Mammary epithelial cell (primary cell): ENCODE measurements at regions of chr1 and their contacts with region 1.

Region 1: DNA sequence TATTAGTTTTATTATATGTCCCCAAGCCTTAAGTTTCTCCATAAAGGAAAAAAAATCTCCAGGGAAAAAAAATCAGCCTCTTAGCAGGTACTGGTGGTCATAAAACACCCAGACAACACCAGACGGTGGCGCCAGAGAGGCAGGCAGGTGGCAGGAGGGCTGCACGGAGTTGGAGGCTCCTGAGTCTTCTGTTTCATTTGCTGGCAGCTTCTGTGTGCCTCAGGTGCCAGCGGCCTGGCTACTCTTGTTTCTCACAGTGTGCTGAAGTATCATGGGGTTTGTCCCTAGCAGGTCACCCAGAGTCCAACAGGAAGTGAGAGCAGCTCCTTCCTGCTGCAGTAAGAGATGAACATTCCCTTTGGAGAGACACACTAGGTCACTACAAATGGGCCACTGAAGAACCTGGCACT is 123.3 kb upstream of the GADD45A start:
- DNase-seq: peak; percentile 85
- H3K4me3 ChIP-seq: no peak overlapping the region
- H3K27ac ChIP-seq: peak overlapping the region; percentile 54
- H3K4me1 ChIP-seq: peaks cover 16% of the 10 kb centered on the region
- H3K27me3 ChIP-seq: no peaks in the 10 kb centered on the region
- CTCF ChIP-seq: peak; percentile 93 to 97

Region 2: DNA sequence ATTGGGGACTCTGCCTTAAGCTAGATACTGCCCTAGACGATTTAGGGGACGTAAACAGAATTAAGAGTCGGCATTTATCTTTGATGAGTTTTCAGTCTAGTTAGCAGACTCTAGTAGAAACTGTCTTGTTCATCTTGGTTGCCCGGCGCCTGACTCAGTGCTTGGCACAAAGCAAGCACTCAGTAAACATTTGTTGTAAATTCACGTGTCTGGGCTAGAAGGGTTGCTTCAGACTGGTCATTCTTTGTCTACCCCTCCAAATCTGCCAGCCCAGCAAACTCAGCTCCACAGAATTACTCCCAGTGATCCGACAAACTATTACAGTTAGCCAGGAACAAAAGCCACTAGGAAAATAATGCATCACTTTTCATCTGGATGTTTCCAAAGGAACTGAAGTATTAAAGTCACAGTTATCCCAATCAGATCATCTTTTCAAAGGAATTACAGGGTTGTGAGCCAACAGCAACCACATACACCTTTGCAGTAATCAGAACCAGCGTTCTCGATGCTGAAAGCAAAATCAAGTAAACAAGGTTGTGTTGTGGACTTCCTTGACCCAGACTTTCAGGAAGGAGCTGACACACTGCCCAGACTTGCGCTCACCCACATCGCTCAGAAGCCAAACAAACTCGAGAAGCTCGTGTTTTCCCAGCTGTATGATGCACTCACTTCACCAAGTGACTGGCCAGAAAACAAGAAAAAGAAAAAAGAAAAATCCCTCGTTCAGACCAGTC is 56.7 kb after region 1 on chr1:
- CTCF ChIA-PET with region 1: no interaction called
- dilution Hi-C with region 1: no loop called
- in situ Hi-C with region 1: no loop called
- intact Hi-C with region 1: loop called (anchors 2 kb)
- DNase-seq: peak; percentile 96
- H3K4me3 ChIP-seq: peak overlapping the region in 1 of 3 experiments; percentile 28
- H3K27ac ChIP-seq: peak overlapping the region; percentile 83
- H3K4me1 ChIP-seq: peaks cover 20% of the 10 kb centered on the region
- H3K27me3 ChIP-seq: no peaks in the 10 kb centered on the region
- CTCF ChIP-seq: no peak

Region 3: DNA sequence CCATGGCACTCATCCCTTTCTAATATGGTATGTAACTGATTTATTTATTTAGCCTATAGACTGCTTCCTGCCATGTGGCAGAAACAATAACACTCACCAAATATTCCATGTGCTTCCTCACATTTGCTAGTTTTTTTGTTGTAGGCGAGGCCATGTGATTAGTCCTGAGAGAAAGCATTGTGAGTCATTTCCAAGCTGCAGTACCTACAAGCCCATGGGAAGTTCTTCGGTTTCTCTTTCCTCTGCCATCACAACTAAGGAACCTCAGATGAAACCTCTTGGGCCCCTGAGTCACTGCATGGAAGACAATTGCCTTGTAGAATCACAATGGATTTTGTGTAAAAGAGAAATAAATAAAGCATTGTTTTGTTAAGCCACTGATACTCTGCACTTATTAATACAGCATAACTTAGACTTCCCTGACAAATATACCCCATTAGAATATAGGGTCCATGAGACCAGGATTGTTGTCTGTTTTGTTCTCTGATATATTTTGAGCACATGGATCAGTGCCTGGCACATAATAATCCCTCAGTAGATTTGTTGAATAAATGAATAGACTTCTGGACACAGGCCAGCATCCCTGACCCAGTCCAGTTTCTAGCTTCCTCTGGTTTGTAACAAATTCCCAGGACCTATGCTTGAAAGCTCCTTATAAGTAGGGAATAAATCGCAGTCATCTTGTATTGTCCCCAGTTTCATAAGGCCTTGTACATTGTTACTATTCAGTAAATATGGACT is 65.0 kb after region 1 on chr1:
- CTCF ChIA-PET with region 1: no interaction called
- dilution Hi-C with region 1: no loop called
- in situ Hi-C with region 1: no loop called
- intact Hi-C with region 1: loop called (anchors 2 kb)
- DNase-seq: peak; percentile 100
- H3K4me3 ChIP-seq: no peak overlapping the region
- H3K27ac ChIP-seq: peak overlapping the region; percentile 97
- H3K4me1 ChIP-seq: peaks cover 55% of the 10 kb centered on the region
- H3K27me3 ChIP-seq: no peaks in the 10 kb centered on the region
- CTCF ChIP-seq: no peak

Region 4: GRCh38 chr1:67760030-67760821 is 198.5 kb after region 1 on chr1:
- CTCF ChIA-PET with region 1: interaction called, 5 read pairs
- dilution Hi-C with region 1: no loop called
- in situ Hi-C with region 1: no loop called
- intact Hi-C with region 1: loop called (anchors 1 kb)
- DNase-seq: peak; percentile 81
- H3K4me3 ChIP-seq: no peak overlapping the region
- H3K27ac ChIP-seq: peak overlapping the region; percentile 91
- H3K4me1 ChIP-seq: peaks cover 37% of the 10 kb centered on the region
- H3K27me3 ChIP-seq: no peaks in the 10 kb centered on the region
- CTCF ChIP-seq: peak; percentile 73 to 77

Region 5: GRCh38 chr1:67889953-67890567 is 328.4 kb after region 1 on chr1:
- CTCF ChIA-PET with region 1: no interaction called
- dilution Hi-C with region 1: no loop called
- in situ Hi-C with region 1: no loop called
- intact Hi-C with region 1: no loop called
- DNase-seq: peak; percentile 84
- H3K4me3 ChIP-seq: no peak overlapping the region
- H3K27ac ChIP-seq: peak overlapping the region; percentile 65
- H3K4me1 ChIP-seq: peaks cover 42% of the 10 kb centered on the region
- H3K27me3 ChIP-seq: no peaks in the 10 kb centered on the region
- CTCF ChIP-seq: no peak